GM10248 (cell line): ENCODE measurements at regions of chr1 and their contacts with region 1.

Region 1: GRCh38 chr1:113042285-113043143 is 30.5 kb upstream of the LRIG2 start:
- DNase-seq: peak; percentile 75
- CTCF ChIP-seq: peak; percentile 75

Region 2: DNA sequence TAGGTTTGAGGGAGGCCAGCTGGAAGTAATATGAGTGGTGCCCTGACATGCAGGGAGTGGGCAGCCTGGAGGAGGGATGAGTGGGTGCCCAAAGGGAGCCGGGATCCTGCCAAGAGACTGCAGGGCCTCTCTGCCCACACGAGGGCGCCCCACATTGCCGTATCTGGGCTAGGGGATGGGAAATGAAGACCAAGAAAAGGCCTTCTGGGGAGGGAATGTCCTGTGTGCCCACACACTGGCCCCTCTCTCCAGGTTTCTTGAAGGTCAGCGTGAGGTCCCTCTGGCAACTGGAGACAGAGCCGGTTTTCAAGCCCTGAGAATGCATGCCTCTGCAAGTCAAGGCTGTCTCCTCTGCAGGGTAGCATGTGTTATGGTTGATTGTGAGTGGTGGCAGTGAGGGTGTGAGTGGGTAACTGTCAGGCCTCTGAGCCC is 233.2 kb before region 1 on chr1:
- CTCF ChIA-PET with region 1: interaction called, 23 read pairs
- POLR2A ChIA-PET with region 1: no interaction called
- DNase-seq: peak; percentile 81
- CTCF ChIP-seq: peak; percentile 93

Region 3: GRCh38 chr1:112882271-112882744 is 160.2 kb before region 1 on chr1:
- CTCF ChIA-PET with region 1: interaction called, 119 read pairs
- POLR2A ChIA-PET with region 1: no interaction called
- DNase-seq: no peak
- CTCF ChIP-seq: no peak

Region 4: GRCh38 chr1:112888416-112889029 is 154.0 kb before region 1 on chr1:
- CTCF ChIA-PET with region 1: interaction called, 11 read pairs
- POLR2A ChIA-PET with region 1: no interaction called
- DNase-seq: no peak
- CTCF ChIP-seq: no peak

Region 5: GRCh38 chr1:113031171-113031933 is 11.2 kb before region 1 on chr1:
- CTCF ChIA-PET with region 1: interaction called, 18 read pairs
- POLR2A ChIA-PET with region 1: no interaction called
- DNase-seq: peak; percentile 45
- CTCF ChIP-seq: no peak

Region 6: DNA sequence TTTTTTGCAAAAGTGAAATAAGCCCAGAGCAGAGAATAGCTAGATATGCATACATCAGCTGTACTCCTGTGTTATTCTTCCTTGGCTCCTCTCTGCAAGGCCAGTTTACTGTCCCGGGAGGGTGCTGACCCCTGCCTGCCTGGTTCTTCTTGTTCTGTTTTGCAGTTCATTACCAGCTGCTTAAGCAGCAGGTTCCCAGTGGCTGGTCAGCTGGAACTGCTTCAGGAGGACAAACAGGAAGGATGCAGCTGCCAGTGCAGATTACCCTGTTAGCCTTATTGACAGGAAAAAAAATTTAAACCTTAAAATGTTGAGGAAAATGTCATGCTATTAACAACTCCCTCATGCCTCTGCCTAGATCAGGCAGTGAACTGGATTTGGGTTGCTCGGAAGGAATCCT is 14.5 kb after region 1 on chr1:
- CTCF ChIA-PET with region 1: interaction called, 32 read pairs
- POLR2A ChIA-PET with region 1: no interaction called
- DNase-seq: no peak
- CTCF ChIP-seq: no peak